ENCODE measurements at regions of chr6 and their contacts with region 1.

Region 1: GRCh38 chr6:49531774-49532569 is 18.5 kb upstream of the C6orf141 start:
- DNase-seq: peak; percentile 15
- H3K4me3 ChIP-seq: no peak overlapping the region
- H3K27ac ChIP-seq: no peak overlapping the region
- H3K27me3 ChIP-seq: no peaks in the 10 kb centered on the region
- CTCF ChIP-seq: peak; percentile 91

Region 2: DNA sequence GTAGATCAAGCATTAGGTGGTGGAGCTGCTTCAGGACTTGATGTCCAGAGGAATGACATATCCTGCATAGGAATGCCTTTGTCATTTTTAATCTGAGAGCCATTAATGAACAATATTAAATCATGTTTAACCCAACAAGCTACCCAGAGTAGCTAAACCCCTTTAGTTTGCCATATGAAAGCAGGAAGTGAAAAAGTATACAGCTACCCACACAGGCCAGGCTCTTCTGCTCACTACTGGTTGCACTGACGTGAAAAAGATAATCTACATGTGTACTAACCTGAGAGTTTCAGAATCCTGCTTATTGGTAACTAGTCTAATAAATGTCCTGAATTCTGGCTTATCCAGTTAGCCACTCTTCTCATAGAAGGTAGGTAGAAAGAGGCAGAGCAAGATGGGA is 12.3 kb before region 1 on chr6:
- CTCF ChIA-PET with region 1: interaction called, 39 read pairs
- POLR2A ChIA-PET with region 1: no interaction called
- DNase-seq: no peak
- H3K4me3 ChIP-seq: no peak overlapping the region
- H3K27ac ChIP-seq: no peak overlapping the region
- H3K27me3 ChIP-seq: peaks cover 2% of the 10 kb centered on the region
- CTCF ChIP-seq: no peak

Region 3: DNA sequence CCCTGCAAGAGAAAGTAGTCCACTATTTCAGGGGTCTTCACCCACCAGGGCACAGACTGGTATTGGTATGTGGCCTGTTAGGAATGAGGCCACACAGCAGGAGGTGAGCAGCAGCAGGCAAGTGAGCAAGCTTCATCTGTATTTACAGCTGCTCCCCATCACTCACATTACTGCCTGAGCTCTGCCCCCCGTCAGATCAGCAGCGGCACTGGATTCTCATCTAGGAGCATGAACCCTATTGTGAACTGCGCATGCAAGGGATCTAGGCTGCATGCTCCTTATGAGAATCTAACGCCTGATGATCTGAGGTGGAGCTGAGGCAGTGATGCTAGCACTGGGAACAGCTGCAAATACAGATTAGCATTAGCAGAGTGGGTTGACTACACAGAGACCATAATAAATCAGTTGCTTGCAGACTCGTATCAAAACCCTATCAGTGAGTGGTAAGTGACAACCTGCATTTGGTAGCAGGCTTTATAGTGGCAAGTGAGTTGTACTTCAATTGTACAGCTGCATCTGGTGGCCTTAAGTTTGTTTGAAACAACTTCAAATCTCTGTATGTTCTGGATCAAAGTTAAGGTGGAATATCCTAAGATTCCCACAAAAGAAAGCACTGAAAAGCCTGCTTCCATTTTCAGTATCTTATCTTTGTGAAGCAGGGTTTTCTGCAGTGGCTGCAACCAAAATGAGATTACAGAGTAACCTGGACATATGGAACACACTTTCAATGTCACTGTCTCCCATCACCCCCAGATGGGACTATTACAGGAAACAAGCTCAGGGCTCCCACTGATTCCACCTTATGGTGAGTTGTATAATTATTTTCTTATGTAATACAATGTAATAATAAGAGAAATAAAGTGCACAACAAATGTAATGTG is 31.3 kb after region 1 on chr6:
- CTCF ChIA-PET with region 1: interaction called, 27 read pairs
- POLR2A ChIA-PET with region 1: no interaction called
- DNase-seq: no peak
- H3K4me3 ChIP-seq: no peak overlapping the region
- H3K27ac ChIP-seq: no peak overlapping the region
- H3K27me3 ChIP-seq: no peaks in the 10 kb centered on the region
- CTCF ChIP-seq: no peak

Region 4: GRCh38 chr6:49606696-49607390 is 74.9 kb after region 1 on chr6:
- CTCF ChIA-PET with region 1: interaction called, 283 read pairs
- POLR2A ChIA-PET with region 1: no interaction called
- DNase-seq: peak; percentile 74
- H3K4me3 ChIP-seq: no peak overlapping the region
- H3K27ac ChIP-seq: no peak overlapping the region
- H3K27me3 ChIP-seq: no peaks in the 10 kb centered on the region
- CTCF ChIP-seq: peak; percentile 89

Region 5: GRCh38 chr6:49764571-49765236 is 232.7 kb after region 1 on chr6:
- CTCF ChIA-PET with region 1: no interaction called
- POLR2A ChIA-PET with region 1: no interaction called
- DNase-seq: no peak
- H3K4me3 ChIP-seq: no peak overlapping the region
- H3K27ac ChIP-seq: no peak overlapping the region
- H3K27me3 ChIP-seq: no peaks in the 10 kb centered on the region
- CTCF ChIP-seq: no peak

Region 6: DNA sequence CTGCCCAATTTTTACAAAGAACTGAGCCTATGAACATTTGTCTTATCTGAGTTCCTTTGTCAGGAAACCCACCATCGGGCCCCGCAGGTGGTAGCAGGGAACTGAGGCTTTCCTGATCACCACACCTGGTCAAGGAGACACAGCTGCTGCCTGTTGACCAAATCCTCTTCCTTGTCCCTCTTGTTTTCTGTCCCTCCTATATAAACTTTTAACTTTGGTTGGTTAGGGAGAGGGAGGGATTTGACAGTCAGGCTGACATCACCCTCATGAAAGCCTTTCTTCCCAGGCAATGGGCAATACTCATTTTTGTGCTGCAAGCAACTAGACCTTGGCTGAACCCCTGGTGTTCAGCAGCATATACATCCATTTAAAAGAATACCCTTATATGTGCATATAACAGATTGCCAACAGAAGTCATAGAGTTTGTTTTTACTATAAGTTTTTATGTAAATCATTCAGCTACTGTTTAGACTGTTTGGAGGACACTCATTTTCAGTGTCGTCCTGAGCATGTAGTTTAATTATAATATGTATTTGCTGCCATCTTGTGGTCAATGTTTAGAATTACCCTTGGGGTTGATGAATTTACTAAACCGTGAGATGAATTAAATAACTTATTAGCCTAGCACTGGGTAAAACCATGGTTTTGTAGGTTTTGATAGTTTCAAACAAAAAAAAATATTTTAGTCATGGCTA is 317.4 kb after region 1 on chr6:
- CTCF ChIA-PET with region 1: interaction called, 63 read pairs
- POLR2A ChIA-PET with region 1: no interaction called
- DNase-seq: peak; percentile 18
- H3K4me3 ChIP-seq: no peak overlapping the region
- H3K27ac ChIP-seq: no peak overlapping the region
- H3K27me3 ChIP-seq: no peaks in the 10 kb centered on the region
- CTCF ChIP-seq: peak; percentile 53

Region 7: DNA sequence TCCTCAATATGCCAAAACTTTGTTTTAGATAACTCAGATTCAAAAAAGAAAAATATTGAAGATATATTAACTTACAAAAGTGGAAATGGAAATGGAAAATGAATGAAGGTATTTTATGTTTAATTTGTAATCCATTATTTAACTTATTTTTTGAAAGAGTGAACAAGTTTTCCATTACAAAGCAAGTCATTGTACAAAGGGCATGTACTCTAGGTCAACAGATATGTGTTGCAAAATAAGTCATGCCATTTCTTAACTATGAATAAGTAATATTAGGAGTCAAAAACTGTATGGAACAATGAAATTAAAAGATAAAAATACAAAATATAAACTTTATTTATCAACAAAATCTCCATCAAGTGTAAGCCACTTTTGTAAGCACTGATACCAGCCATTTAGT is 463.3 kb after region 1 on chr6:
- CTCF ChIA-PET with region 1: no interaction called
- POLR2A ChIA-PET with region 1: no interaction called
- DNase-seq: no peak
- H3K4me3 ChIP-seq: no peak overlapping the region
- H3K27ac ChIP-seq: no peak overlapping the region
- H3K27me3 ChIP-seq: no peaks in the 10 kb centered on the region
- CTCF ChIP-seq: no peak

Region 8: DNA sequence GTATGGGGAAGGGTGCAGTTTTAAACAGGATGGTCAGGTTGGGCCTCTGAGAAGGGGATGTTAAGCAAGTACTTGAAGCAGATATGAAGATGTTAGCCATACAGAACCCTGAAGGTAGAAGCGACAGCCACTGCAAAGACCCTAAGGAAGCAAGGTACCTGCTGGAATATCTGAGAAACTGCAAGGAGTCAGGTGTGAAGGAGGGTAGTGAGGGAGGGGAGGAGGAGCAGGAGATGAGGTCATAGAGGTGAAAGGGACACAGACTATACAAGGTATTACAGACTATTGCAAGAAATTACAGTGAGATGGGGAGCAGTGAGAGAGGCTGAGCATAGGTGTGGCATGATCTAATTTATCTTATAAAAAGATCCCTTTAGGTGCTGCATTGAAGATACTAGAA is 539.9 kb after region 1 on chr6:
- CTCF ChIA-PET with region 1: no interaction called
- POLR2A ChIA-PET with region 1: no interaction called
- DNase-seq: no peak
- H3K4me3 ChIP-seq: no peak overlapping the region
- H3K27ac ChIP-seq: no peak overlapping the region
- H3K27me3 ChIP-seq: no peaks in the 10 kb centered on the region
- CTCF ChIP-seq: no peak

Region 9: DNA sequence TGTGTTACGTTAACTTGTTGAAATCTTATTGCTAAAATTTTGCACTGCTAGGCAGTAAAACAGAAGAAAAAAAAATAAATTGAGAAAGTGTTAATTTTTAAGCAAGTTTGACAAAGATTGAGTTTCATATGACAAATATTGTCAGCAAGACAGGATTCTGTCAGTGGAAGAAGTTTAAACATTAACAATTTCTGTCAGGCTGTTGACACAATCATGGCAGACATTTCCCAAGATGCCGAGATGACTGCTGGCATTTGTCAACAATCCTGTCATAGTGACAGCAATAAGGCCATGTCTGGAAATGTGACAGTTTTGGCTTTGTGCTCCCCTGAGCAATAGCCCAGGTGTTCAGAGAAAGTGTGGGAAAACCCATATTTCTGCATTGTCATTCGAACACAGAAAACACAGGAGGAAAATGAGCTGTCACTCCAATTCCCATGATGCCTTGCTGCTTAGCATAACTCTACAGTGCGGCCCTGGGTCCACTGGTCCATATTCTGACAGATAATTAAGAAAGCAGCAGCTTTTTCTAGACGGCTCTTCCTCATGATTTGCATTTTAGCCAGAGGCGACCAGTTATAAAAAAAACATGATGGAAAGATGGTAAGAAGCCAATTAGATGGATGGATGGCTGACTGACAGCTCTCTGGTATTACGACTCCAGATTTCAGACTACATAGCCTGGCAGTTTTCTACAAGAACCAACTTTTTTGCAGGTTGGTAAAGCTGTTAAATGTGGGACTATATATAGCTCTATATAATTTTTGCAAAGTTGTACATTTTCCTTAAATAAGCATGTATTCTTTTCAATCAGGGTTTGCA is 561.4 kb after region 1 on chr6:
- CTCF ChIA-PET with region 1: no interaction called
- POLR2A ChIA-PET with region 1: no interaction called
- DNase-seq: no peak
- H3K4me3 ChIP-seq: no peak overlapping the region
- H3K27ac ChIP-seq: no peak overlapping the region
- H3K27me3 ChIP-seq: no peaks in the 10 kb centered on the region
- CTCF ChIP-seq: no peak